Adrenal gland (tissue), 19 donors: ENCODE measurements at regions of chr3 and their contacts with region 1.

Region 1: GRCh38 chr3:24963762-24964625 is 464.1 kb upstream of the RARB start:
- DNase-seq: no peak
- H3K4me3 ChIP-seq: no peak overlapping the region
- H3K27ac ChIP-seq: no peak overlapping the region
- H3K4me1 ChIP-seq: no peaks in the 10 kb centered on the region
- H3K27me3 ChIP-seq: no peaks in the 10 kb centered on the region
- CTCF ChIP-seq: peak; percentile 24 to 56 (median 38)
- POLR2A ChIP-seq: no peak

Region 2: GRCh38 chr3:24614361-24614760 is 349.6 kb before region 1 on chr3:
- intact Hi-C with region 1: no loop called
- DNase-seq: no peak
- H3K4me3 ChIP-seq: no peak overlapping the region
- H3K27ac ChIP-seq: no peak overlapping the region
- H3K4me1 ChIP-seq: no peaks in the 10 kb centered on the region
- H3K27me3 ChIP-seq: peaks cover 7% of the 10 kb centered on the region
- CTCF ChIP-seq: no peak
- POLR2A ChIP-seq: no peak

Region 3: DNA sequence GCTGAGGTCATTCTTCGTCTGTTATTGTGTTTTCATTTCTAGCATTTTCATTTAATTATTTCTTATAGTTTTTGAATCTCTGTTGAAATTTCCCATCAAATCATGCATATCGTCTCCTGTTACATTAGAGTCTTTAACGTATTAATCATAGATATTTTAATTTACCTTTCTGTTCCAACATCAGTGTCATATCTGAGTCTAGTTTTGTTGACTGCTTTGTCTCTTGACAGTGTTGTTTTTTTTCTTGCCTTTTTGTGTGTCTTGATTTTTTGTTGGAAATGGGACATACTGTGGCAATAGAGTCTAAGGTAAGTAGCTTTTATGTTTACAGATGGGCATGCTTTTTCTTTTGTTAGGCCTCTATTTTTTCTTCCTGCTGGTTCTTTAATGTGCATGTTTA is 182.5 kb before region 1 on chr3:
- intact Hi-C with region 1: loop called in 1 of 2 experiments (anchors 10 kb)
- DNase-seq: no peak
- H3K4me3 ChIP-seq: no peak overlapping the region
- H3K27ac ChIP-seq: no peak overlapping the region
- H3K4me1 ChIP-seq: no peaks in the 10 kb centered on the region
- H3K27me3 ChIP-seq: no peaks in the 10 kb centered on the region
- CTCF ChIP-seq: no peak
- POLR2A ChIP-seq: no peak

Region 4: DNA sequence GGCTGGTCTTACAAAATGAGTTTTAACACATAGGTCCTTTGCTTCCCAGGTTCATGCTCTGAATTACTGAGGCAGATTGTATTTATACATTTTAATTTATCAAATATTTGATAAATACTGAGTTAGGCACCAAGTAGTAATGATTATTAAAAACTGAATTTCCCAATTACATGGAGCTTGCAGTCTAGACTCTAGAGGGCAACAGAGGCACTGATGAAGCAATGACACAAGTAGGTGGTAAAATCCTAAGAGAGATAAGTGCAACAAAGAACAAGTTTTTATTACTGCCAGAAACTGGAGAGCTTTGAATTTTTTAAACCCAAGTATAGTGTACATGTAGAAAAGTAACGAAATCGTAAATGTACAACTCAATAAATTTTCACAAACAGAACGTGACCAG is 57.8 kb after region 1 on chr3:
- intact Hi-C with region 1: no loop called
- DNase-seq: peak in 1 of 7 donors; percentile 6
- H3K4me3 ChIP-seq: no peak overlapping the region
- H3K27ac ChIP-seq: no peak overlapping the region
- H3K4me1 ChIP-seq: no peaks in the 10 kb centered on the region
- H3K27me3 ChIP-seq: no peaks in the 10 kb centered on the region
- CTCF ChIP-seq: peak; percentile 25 to 52 (median 48)
- POLR2A ChIP-seq: no peak

Region 5: DNA sequence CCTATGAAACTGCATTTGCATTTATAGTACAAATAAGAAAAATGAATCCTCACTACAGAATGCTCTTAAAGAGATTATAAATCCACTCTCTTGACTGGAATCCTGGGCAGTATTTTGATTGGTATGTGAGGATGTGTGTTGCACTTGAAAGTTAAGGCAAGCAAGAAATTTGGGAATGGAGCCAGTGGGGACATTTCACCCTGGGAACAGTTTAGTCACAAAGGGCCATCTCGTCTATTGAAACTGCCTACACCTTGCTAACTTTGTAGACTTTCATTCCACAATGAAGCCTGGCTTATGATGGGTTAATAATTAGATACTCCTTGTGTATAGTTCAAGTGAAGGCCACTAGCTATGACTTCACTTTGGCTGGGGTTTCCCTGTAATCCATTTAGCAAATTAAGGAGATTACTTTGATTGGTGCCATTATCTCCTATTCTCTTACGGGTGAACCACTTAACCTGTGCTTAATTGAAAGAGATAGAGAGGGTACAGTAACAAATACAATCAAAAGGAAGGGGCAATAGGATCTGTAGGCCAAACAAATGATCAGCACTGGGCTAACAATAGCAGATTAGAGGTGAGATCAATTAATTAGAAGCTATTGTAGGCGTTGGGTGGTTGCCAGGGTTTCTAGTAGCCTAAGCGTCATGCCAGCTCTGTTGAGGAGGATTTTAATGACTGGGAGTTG is 317.2 kb after region 1 on chr3:
- intact Hi-C with region 1: no loop called
- DNase-seq: no peak
- H3K4me3 ChIP-seq: no peak overlapping the region
- H3K27ac ChIP-seq: no peak overlapping the region
- H3K4me1 ChIP-seq: no peaks in the 10 kb centered on the region
- H3K27me3 ChIP-seq: no peaks in the 10 kb centered on the region
- CTCF ChIP-seq: no peak
- POLR2A ChIP-seq: no peak